Naive thymus-derived CD4-positive, alpha-beta T cell (primary cell): ENCODE measurements at regions of chr2 and their contacts with region 1.

Region 1: DNA sequence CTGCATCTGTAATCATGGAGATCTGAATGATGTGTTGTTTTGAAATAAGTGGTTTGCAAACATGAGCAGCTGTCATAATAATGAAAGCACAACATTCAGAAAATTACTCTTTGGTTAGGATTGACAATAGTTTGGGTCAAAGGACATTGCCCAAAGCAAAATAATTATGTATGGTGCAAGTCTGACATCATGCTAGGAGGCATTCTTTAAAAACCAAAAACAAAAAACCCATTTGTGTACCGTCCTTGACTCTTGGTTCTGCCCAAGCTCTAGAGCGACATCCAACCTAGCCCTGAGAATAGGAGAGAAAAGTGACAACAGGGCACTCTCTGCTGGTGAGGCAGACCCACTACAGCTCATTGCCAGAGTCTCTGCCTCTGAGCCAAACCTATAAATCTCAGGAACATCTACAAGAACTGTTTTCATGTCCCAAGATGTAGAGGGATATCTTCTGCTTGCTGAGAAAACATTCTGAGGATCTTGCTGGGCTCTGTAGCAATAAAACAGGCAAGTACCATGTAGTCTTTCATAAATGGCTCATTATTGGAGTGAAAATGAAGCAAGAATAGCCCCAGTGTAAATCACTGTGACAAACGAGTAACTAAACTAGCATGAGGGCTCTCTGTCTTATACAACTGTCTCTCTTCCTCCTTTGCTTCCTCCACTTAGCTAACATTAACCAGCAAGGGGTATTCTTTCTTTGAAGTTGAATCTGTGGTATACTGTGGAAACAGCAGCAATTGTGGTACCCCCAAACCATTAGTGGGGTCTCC is 266.8 kb upstream of the CXCR4 start:
- DNase-seq: peak in 7 of 9 donors; percentile 63 to 79 (median 69)
- ATAC-seq: peak; percentile 78
- H3K4me3 ChIP-seq: no peak overlapping the region
- H3K4me3 Mint-ChIP-seq: peak overlapping the region in 6 of 10 donors; percentile 4 to 73 (median 30)
- H3K27ac ChIP-seq: no peak overlapping the region
- H3K27ac Mint-ChIP-seq: peak overlapping the region; percentile 37 to 98 (median 92)
- H3K4me1 ChIP-seq: peaks cover 22 to 25% of the 10 kb centered on the region in 2 donors
- H3K4me1 Mint-ChIP-seq: peaks cover 21 to 46% (median 40%) of the 10 kb centered on the region in 7 donors
- H3K27me3 ChIP-seq: no peaks in the 10 kb centered on the region
- H3K27me3 Mint-ChIP-seq: no peaks in the 10 kb centered on the region

Region 2: DNA sequence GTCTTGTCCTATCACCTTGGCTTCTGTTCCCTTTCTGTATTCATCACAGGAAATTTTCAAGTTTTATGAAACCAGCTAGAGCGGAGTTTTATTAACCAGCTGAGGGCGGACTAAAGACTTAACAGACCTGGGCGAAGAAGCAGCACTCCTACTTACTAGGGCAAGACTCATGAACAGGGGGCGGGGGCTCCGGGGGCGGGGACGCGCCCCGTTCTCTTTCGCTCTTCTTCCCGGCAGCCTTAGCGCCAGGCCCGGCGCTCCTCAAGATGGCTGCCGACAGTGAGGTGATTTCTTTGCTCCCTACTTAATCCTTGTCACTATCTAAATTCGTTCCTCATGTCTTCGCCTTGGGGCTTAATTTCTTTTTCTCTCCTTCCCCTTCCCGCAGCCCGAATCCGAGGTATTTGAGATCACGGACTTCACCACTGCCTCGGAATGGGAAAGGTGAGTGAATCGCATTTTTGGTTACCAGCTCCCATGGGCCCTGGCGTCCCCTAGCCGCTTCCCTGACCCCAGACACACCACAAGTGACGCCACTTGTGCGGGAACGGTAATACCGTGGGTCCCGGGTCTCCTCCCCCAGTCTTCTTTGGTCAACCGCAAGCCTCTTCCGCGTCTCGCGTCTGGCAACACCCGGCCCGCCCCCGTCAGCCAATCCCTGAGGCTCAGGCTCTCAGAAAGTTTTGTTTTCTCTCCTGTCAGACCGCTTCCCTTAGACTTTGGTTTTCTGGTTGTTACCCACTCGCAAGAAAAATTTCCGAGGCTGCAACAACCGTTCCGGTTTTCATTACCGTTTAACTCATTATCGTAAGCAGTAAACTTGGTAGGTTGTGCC is 1332.5 kb before region 1 on chr2 and contains the start of gene RAB3GAP1:
- CTCF ChIA-PET with region 1: no interaction called
- POLR2A ChIA-PET with region 1: no interaction called
- intact Hi-C with region 1: loop called in 1 of 2 experiments (anchors 5 kb)
- DNase-seq: peak; percentile 76 to 96 (median 94)
- ATAC-seq: peak; percentile 93
- H3K4me3 ChIP-seq: peak within 1 kb of the TSS; percentile 69
- H3K4me3 Mint-ChIP-seq: peak within 1 kb of the TSS; percentile 94 to 99 (median 97)
- H3K27ac ChIP-seq: peak within 1 kb of the TSS; percentile 99
- H3K27ac Mint-ChIP-seq: peak within 1 kb of the TSS; percentile 98 to 100 (median 99)
- H3K4me1 ChIP-seq: peaks cover 0 to 22% of the 10 kb centered on the region in 2 donors
- H3K4me1 Mint-ChIP-seq: peaks cover 24 to 52% (median 48%) of the 10 kb centered on the region in 7 donors
- H3K27me3 ChIP-seq: no peaks in the 10 kb centered on the region
- H3K27me3 Mint-ChIP-seq: peaks cover 0 to 6% (median 0%) of the 10 kb centered on the region in 5 donors
- total RNA-seq, gene RAB3GAP1: 24.3 to 58.7 (median 42.9) TPM

Region 3: GRCh38 chr2:135797497-135798274 is 587.0 kb before region 1 on chr2:
- CTCF ChIA-PET with region 1: no interaction called
- POLR2A ChIA-PET with region 1: no interaction called
- intact Hi-C with region 1: loop called in 1 of 2 experiments (anchors 2 kb)
- DNase-seq: peak; percentile 46 to 78 (median 69)
- ATAC-seq: peak; percentile 92
- H3K4me3 ChIP-seq: no peak overlapping the region
- H3K4me3 Mint-ChIP-seq: peak overlapping the region in 1 of 10 donors; percentile 58
- H3K27ac ChIP-seq: no peak overlapping the region
- H3K27ac Mint-ChIP-seq: peak overlapping the region in 1 of 9 donors; percentile 65
- H3K4me1 ChIP-seq: peaks cover 0 to 6% of the 10 kb centered on the region in 2 donors
- H3K4me1 Mint-ChIP-seq: peaks cover 0 to 20% (median 14%) of the 10 kb centered on the region in 7 donors
- H3K27me3 ChIP-seq: no peaks in the 10 kb centered on the region
- H3K27me3 Mint-ChIP-seq: no peaks in the 10 kb centered on the region

Region 4: GRCh38 chr2:135913727-135914365 is 470.9 kb before region 1 on chr2:
- CTCF ChIA-PET with region 1: interaction called, 270 read pairs
- POLR2A ChIA-PET with region 1: interaction called, 17 read pairs
- intact Hi-C with region 1: loop called (anchors 1 kb)
- DNase-seq: peak in 7 of 9 donors; percentile 36 to 67 (median 60)
- ATAC-seq: peak; percentile 63
- H3K4me3 ChIP-seq: no peak overlapping the region
- H3K4me3 Mint-ChIP-seq: no peak overlapping the region
- H3K27ac ChIP-seq: no peak overlapping the region
- H3K27ac Mint-ChIP-seq: peak overlapping the region in 6 of 9 donors; percentile 34 to 82 (median 55)
- H3K4me1 ChIP-seq: no peaks in the 10 kb centered on the region
- H3K4me1 Mint-ChIP-seq: peaks cover 0 to 12% (median 3%) of the 10 kb centered on the region in 7 donors
- H3K27me3 ChIP-seq: no peaks in the 10 kb centered on the region
- H3K27me3 Mint-ChIP-seq: no peaks in the 10 kb centered on the region

Region 5: GRCh38 chr2:136112317-136113208 is 272.2 kb before region 1 on chr2:
- CTCF ChIA-PET with region 1: interaction called, 4 read pairs
- POLR2A ChIA-PET with region 1: interaction called, 10 read pairs
- intact Hi-C with region 1: loop called (anchors 1 kb)
- DNase-seq: peak in 2 of 9 donors; percentile 19 to 39
- ATAC-seq: no peak
- H3K4me3 ChIP-seq: no peak overlapping the region
- H3K4me3 Mint-ChIP-seq: peak overlapping the region in 8 of 10 donors; percentile 10 to 100 (median 68)
- H3K27ac ChIP-seq: no peak overlapping the region
- H3K27ac Mint-ChIP-seq: peak overlapping the region in 8 of 9 donors; percentile 39 to 100 (median 69)
- H3K4me1 ChIP-seq: peaks cover 20 to 30% of the 10 kb centered on the region in 2 donors
- H3K4me1 Mint-ChIP-seq: peaks cover 21 to 53% (median 42%) of the 10 kb centered on the region in 7 donors
- H3K27me3 ChIP-seq: no peaks in the 10 kb centered on the region
- H3K27me3 Mint-ChIP-seq: peaks cover 0 to 4% (median 0%) of the 10 kb centered on the region in 5 donors

Region 6: GRCh38 chr2:137321566-137321965 is 936.8 kb after region 1 on chr2:
- CTCF ChIA-PET with region 1: no interaction called
- POLR2A ChIA-PET with region 1: no interaction called
- intact Hi-C with region 1: no loop called
- DNase-seq: no peak
- ATAC-seq: no peak
- H3K4me3 ChIP-seq: no peak overlapping the region
- H3K4me3 Mint-ChIP-seq: no peak overlapping the region
- H3K27ac ChIP-seq: no peak overlapping the region
- H3K27ac Mint-ChIP-seq: no peak overlapping the region
- H3K4me1 ChIP-seq: no peaks in the 10 kb centered on the region
- H3K4me1 Mint-ChIP-seq: no peaks in the 10 kb centered on the region
- H3K27me3 ChIP-seq: no peaks in the 10 kb centered on the region
- H3K27me3 Mint-ChIP-seq: no peaks in the 10 kb centered on the region